OCI-LY7 (cell line): ENCODE measurements at regions of chr2 and their contacts with region 1.

Region 1: DNA sequence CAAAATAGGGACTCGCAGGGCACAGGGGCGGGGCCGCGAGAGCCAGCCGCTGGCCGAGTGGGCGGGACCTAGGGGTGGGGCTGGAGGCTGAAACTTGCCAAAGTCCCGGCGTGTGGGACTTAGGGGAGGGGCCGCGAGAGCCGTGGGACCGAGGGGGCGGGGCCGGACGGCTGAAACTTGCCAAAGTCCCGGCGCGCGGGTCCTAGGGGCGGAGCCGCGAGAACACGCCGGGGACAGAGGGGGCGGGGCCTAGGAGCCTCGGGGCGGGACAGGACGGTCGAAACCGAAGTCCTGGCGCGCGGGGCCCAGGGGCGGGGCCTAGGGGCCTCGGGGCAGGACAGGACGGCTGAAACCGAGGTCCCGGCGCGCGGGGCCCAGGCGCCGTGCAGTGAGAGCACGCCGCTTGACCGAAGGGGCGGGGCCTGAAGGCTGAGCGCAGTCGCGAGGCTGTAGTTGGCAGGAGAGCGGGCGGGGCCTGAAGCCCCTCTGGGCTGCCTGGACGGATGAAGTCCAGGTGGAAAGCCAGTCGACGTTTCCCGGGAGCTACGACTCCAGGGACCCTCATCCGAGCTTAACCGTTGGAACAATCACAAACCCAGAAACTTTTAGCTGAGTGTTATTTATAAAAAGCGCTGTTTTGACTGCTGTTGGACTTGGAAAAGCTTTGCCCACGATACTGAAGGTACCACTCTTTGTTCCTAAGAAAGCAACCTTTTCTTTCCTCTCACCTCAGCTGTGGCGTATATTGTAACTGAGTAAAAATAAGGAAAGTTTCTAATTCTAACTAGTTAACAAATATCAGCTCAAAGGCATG is 475 bp upstream of the BARD1 start:
- DNase-seq: peak; percentile 98
- H3K4me3 ChIP-seq: peak overlapping the region; percentile 97
- H3K27ac ChIP-seq: peak overlapping the region; percentile 98
- H3K4me1 ChIP-seq: peaks cover 26% of the 10 kb centered on the region
- CTCF ChIP-seq: no peak

Region 2: DNA sequence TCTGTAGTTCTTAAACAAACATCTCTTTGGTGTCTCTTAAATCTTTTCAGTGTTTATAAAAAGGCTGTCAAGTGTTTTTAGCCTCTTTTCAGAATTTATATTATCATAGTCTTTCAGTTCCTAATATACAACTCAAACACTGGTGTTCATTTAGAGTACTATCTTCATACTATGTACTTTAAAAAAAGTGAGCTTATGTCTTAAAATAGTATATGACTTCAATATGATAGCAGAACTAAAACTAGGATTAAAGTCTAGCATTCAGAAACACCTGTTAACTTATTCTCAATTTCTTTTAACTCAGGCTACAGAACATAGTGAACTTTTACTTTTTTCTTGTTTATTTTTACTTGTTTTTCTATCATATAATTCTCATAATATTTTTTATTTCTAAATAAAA is 1643.8 kb before region 1 on chr2:
- CTCF ChIA-PET with region 1: no interaction called
- POLR2A ChIA-PET with region 1: interaction called, 3 read pairs
- intact Hi-C with region 1: loop called (anchors 5 kb)
- DNase-seq: peak; percentile 86
- H3K4me3 ChIP-seq: no peak overlapping the region
- H3K27ac ChIP-seq: peak overlapping the region; percentile 94
- H3K4me1 ChIP-seq: peaks cover 45% of the 10 kb centered on the region
- CTCF ChIP-seq: no peak

Region 3: DNA sequence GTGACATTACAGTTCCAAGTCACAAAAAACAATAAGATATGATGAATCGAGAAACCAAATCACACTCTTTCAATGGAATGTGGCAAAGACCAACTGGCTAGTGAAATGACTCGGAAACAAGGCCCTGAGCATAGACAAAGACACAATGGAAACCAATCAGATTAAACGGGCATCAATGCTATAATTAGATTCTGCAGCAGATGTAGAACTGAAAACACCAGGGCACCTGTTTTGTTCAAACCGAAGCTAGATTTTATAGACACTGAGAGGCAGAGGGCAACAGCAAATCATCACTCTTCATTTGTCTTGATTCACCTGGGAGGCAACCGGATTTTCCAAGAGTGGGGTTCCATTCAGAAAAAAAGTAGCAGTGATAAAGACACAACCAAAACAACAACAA is 92.3 kb after region 1 on chr2:
- CTCF ChIA-PET with region 1: interaction called, 9 read pairs
- POLR2A ChIA-PET with region 1: no interaction called
- intact Hi-C with region 1: loop called (anchors 2 kb)
- DNase-seq: peak; percentile 93
- H3K4me3 ChIP-seq: peak overlapping the region; percentile 30
- H3K27ac ChIP-seq: peak overlapping the region; percentile 92
- H3K4me1 ChIP-seq: peaks cover 39% of the 10 kb centered on the region
- CTCF ChIP-seq: no peak

Region 4: GRCh38 chr2:215311625-215312396 is 501.9 kb after region 1 on chr2 and contains the start of gene ATIC:
- CTCF ChIA-PET with region 1: no interaction called
- POLR2A ChIA-PET with region 1: interaction called, 6 read pairs
- intact Hi-C with region 1: loop called (anchors 2 kb)
- DNase-seq: peak; percentile 94
- H3K4me3 ChIP-seq: peak within 1 kb of the TSS; percentile 88
- H3K27ac ChIP-seq: peak within 1 kb of the TSS; percentile 58
- H3K4me1 ChIP-seq: peaks cover 22% of the 10 kb centered on the region
- CTCF ChIP-seq: no peak
- total RNA-seq, gene ATIC: 60.8 and 66.6 TPM in 2 replicates

Region 5: DNA sequence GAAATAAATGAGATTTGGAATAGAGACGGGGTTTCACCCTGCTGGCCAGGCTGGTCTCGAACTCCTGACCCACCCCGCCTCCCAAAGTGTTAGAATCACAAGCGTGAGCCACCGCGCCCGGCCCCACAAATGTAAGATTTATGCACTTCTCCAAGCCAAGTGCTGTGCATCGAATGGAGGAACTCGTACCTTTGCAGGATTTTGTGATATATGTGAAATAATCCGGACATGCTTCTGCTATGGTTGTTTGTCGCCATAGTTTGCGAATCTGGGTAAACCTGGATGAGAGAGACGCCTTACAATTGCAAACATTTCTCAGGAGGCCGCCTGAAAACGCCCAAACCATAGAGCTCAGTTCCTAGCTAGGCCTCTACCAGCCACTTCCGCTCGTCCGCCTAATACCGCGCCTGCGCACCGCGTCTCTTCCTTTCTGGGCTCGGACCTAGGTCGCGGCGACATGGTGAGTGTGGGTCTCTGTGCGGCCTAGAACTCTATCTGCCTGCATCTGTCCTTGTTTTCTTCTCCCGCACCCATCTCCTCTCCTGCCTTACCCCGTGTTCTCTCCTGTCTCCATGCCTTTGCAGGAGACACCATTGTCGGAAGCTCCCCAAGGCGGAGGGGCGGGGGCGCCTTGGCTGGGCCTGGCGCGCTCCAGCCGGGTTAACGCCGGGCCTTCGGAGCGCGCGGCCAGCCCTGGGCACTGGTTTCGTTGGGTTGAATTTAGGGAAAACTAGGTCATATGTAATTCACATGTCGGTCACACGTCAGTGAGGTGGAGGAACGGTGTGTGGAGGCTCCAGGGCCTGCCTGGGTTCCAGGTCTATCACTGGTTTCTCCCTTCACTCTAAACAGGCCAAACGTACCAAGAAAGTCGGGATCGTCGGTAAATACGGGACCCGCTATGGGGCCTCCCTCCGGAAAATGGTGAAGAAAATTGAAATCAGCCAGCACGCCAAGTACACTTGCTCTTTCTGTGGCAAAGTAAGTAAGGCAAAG is 1688.8 kb after region 1 on chr2 and contains the start of gene RPL37A:
- CTCF ChIA-PET with region 1: no interaction called
- POLR2A ChIA-PET with region 1: no interaction called
- intact Hi-C with region 1: loop called (anchors 10 kb)
- DNase-seq: peak; percentile 95
- H3K4me3 ChIP-seq: peak within 1 kb of the TSS; percentile 94
- H3K27ac ChIP-seq: peak within 1 kb of the TSS; percentile 67
- H3K4me1 ChIP-seq: peaks cover 47% of the 10 kb centered on the region
- CTCF ChIP-seq: no peak; the same call in 1 of the 2 replicates
- total RNA-seq, gene RPL37A: 4,020 and 4,194 TPM in 2 replicates